ENCODE measurements at regions of chr11 and their contacts with region 1.

Region 1: GRCh38 chr11:10808553-10809372 is at the start of gene EIF4G2:
- DNase-seq: peak; percentile 98 to 99 (median 99)
- H3K4me3 ChIP-seq: peak within 1 kb of the TSS; percentile 77 to 95
- H3K4me3 Mint-ChIP-seq: peak within 1 kb of the TSS; percentile 96 to 99 (median 98)
- H3K27ac ChIP-seq: peak within 1 kb of the TSS; percentile 97
- H3K27ac Mint-ChIP-seq: peak within 1 kb of the TSS; percentile 98 to 100 (median 99)
- H3K4me1 ChIP-seq: peaks cover 44% of the 10 kb centered on the region
- H3K4me1 Mint-ChIP-seq: peaks cover 27 to 62% (median 40%) of the 10 kb centered on the region in 4 donors
- H3K27me3 ChIP-seq: no peaks in the 10 kb centered on the region
- H3K27me3 Mint-ChIP-seq: peaks cover 0 to 3% of the 10 kb centered on the region in 2 donors
- total RNA-seq, gene EIF4G2: 659 to 664 TPM

Region 2: GRCh38 chr11:10455637-10456487 is 352.9 kb before region 1 on chr11:
- CTCF ChIA-PET with region 1: no interaction called
- POLR2A ChIA-PET with region 1: interaction called, 28 read pairs
- intact Hi-C with region 1: loop called (anchors 5 kb)
- DNase-seq: peak; percentile 70 to 91 (median 75)
- H3K4me3 ChIP-seq: peak overlapping the region; percentile 53 to 85
- H3K4me3 Mint-ChIP-seq: peak overlapping the region; percentile 90 to 96 (median 93)
- H3K27ac ChIP-seq: peak overlapping the region; percentile 75
- H3K27ac Mint-ChIP-seq: peak overlapping the region; percentile 94 to 97 (median 95)
- H3K4me1 ChIP-seq: peaks cover 84% of the 10 kb centered on the region
- H3K4me1 Mint-ChIP-seq: peaks cover 59 to 97% (median 79%) of the 10 kb centered on the region in 4 donors
- H3K27me3 ChIP-seq: no peaks in the 10 kb centered on the region
- H3K27me3 Mint-ChIP-seq: no peaks in the 10 kb centered on the region

Region 3: DNA sequence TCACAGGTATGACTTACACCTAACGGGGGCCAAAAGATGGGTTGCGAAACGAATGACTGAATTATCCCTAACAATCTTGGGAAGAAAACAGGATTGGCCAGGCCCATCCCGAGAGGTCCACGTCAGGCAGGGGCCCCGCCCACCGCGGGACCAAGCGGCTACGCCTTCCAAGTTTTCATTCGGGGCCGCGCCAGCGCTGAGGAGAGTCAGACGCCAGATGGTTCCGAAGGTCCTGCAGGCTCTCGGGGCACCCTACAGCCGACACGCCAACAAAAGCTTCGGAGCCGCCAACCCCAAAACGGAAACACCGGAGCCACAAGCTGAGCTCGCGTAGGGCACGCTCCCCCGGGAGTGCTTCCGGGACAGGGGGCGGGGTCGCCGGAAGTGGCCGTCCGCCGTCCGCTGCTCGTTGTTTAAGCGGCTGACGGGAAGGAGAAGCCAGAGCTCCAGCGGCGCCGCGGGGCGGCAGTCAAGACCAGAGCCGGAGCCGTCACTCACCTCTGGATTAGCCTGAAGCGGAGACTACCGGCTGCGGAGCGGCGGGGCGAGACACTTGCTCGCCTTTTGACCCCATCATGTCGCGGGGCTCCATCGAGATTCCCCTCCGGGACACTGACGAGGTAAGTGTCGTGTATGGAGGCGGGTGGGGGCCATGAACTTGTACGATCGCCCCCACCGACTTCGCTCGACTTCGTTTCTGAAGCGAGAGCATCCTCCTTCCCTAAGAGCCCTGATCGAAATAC is 57.8 kb before region 1 on chr11 and contains the start of gene CTR9:
- CTCF ChIA-PET with region 1: no interaction called
- POLR2A ChIA-PET with region 1: interaction called, 62 read pairs
- intact Hi-C with region 1: loop called (anchors 1 kb)
- DNase-seq: peak; percentile 88 to 91 (median 89)
- H3K4me3 ChIP-seq: peak within 1 kb of the TSS; percentile 95 to 96
- H3K4me3 Mint-ChIP-seq: peak within 1 kb of the TSS; percentile 92 to 98 (median 97)
- H3K27ac ChIP-seq: peak within 1 kb of the TSS; percentile 81
- H3K27ac Mint-ChIP-seq: peak within 1 kb of the TSS; percentile 81 to 97 (median 94)
- H3K4me1 ChIP-seq: peaks cover 29% of the 10 kb centered on the region
- H3K4me1 Mint-ChIP-seq: peaks cover 14 to 46% (median 20%) of the 10 kb centered on the region in 4 donors
- H3K27me3 ChIP-seq: no peaks in the 10 kb centered on the region
- H3K27me3 Mint-ChIP-seq: no peaks in the 10 kb centered on the region
- total RNA-seq, gene CTR9: 57.2 to 68.6 TPM

Region 4: GRCh38 chr11:10797531-10797930 is 11.2 kb before region 1 on chr11:
- CTCF ChIA-PET with region 1: interaction called, 74 read pairs
- POLR2A ChIA-PET with region 1: interaction called, 263 read pairs
- intact Hi-C with region 1: loop called (anchors 1 kb)
- DNase-seq: no peak
- H3K4me3 ChIP-seq: no peak overlapping the region
- H3K4me3 Mint-ChIP-seq: peak overlapping the region in 1 of 8 donors; percentile 2
- H3K27ac ChIP-seq: no peak overlapping the region
- H3K27ac Mint-ChIP-seq: peak overlapping the region in 1 of 7 donors; percentile 71
- H3K4me1 ChIP-seq: peaks cover 75% of the 10 kb centered on the region
- H3K4me1 Mint-ChIP-seq: peaks cover 58 to 86% (median 72%) of the 10 kb centered on the region in 4 donors
- H3K27me3 ChIP-seq: no peaks in the 10 kb centered on the region
- H3K27me3 Mint-ChIP-seq: no peaks in the 10 kb centered on the region

Region 5: DNA sequence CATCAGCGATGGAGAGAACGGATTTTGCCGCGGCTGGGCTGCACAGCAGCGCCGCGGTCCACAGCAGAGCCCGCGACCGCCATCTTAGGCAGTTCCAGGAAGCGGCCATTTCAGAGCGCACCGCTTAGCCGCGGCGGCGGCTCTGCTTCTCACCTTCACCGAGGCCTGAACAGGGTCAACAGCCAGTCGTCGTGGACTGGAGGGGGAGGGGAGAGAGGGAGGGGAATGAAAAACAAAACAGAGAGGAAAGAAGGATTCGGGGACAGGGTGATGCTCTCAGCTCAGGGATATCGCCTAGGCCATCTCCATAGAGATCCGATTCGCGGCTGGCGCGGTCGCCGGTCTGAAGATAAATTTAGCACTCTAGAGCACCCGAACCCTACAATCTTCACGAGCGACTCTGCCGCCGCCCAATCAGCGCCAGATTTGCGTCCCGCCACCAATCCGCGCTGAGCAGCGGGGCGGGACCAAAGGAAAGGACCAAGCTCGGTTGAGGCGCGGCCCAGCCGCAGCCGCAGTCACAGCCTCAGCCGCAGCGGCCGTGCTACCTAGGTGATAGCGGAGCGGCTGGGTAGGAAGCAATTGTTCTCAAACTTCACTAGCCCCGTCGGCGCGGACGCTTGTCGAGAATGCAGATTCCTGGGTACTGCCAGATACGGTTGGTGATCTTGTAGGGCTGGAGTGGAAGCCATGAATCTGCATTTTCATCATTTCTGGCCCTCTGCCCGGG is 49.1 kb after region 1 on chr11 and contains the start of gene ZBED5:
- CTCF ChIA-PET with region 1: interaction called, 35 read pairs
- POLR2A ChIA-PET with region 1: interaction called, 469 read pairs
- intact Hi-C with region 1: loop called (anchors 1 kb)
- DNase-seq: peak; percentile 95 to 97 (median 97)
- H3K4me3 ChIP-seq: peak within 1 kb of the TSS; percentile 93 to 100
- H3K4me3 Mint-ChIP-seq: peak within 1 kb of the TSS; percentile 98 to 100 (median 99)
- H3K27ac ChIP-seq: peak within 1 kb of the TSS; percentile 93
- H3K27ac Mint-ChIP-seq: peak within 1 kb of the TSS; percentile 99 to 100 (median 99)
- H3K4me1 ChIP-seq: peaks cover 36% of the 10 kb centered on the region
- H3K4me1 Mint-ChIP-seq: peaks cover 26 to 63% (median 34%) of the 10 kb centered on the region in 4 donors
- H3K27me3 ChIP-seq: no peaks in the 10 kb centered on the region
- H3K27me3 Mint-ChIP-seq: no peaks in the 10 kb centered on the region
- total RNA-seq, gene ZBED5: 126 to 129 TPM

Region 6: GRCh38 chr11:10933455-10934292 is 124.9 kb after region 1 on chr11:
- CTCF ChIA-PET with region 1: interaction called, 6 read pairs
- POLR2A ChIA-PET with region 1: interaction called, 16 read pairs
- intact Hi-C with region 1: loop called (anchors 5 kb)
- DNase-seq: peak; percentile 70 to 80 (median 74)
- H3K4me3 ChIP-seq: peak overlapping the region; percentile 21 to 33
- H3K4me3 Mint-ChIP-seq: peak overlapping the region; percentile 85 to 94 (median 90)
- H3K27ac ChIP-seq: no peak overlapping the region
- H3K27ac Mint-ChIP-seq: peak overlapping the region in 5 of 7 donors; percentile 11 to 86 (median 57)
- H3K4me1 ChIP-seq: peaks cover 20% of the 10 kb centered on the region
- H3K4me1 Mint-ChIP-seq: peaks cover 5 to 21% (median 12%) of the 10 kb centered on the region in 4 donors
- H3K27me3 ChIP-seq: peaks cover 23% of the 10 kb centered on the region
- H3K27me3 Mint-ChIP-seq: peaks cover 11 to 26% of the 10 kb centered on the region in 2 donors

Region 7: GRCh38 chr11:10990637-10991193 is 182.0 kb after region 1 on chr11:
- CTCF ChIA-PET with region 1: no interaction called
- POLR2A ChIA-PET with region 1: no interaction called
- intact Hi-C with region 1: no loop called
- DNase-seq: no peak
- H3K4me3 ChIP-seq: no peak overlapping the region
- H3K4me3 Mint-ChIP-seq: no peak overlapping the region
- H3K27ac ChIP-seq: no peak overlapping the region
- H3K27ac Mint-ChIP-seq: no peak overlapping the region
- H3K4me1 ChIP-seq: no peaks in the 10 kb centered on the region
- H3K4me1 Mint-ChIP-seq: no peaks in the 10 kb centered on the region
- H3K27me3 ChIP-seq: no peaks in the 10 kb centered on the region
- H3K27me3 Mint-ChIP-seq: peaks cover 2 to 3% of the 10 kb centered on the region in 2 donors

Measured in CD4-positive, alpha-beta memory T cell (primary cell).